ENCODE measurements at regions of chr3 and their contacts with region 1.

Region 1: GRCh38 chr3:98483130-98483482 is 14.4 kb upstream of the OR5K2 start:
- DNase-seq: no peak
- H3K4me3 ChIP-seq: no peak overlapping the region
- H3K4me3 Mint-ChIP-seq: no peak overlapping the region
- H3K27ac ChIP-seq: no peak overlapping the region
- H3K27ac Mint-ChIP-seq: peak overlapping the region in 1 of 7 donors; percentile 11
- H3K4me1 ChIP-seq: no peaks in the 10 kb centered on the region
- H3K4me1 Mint-ChIP-seq: no peaks in the 10 kb centered on the region
- H3K27me3 ChIP-seq: no peaks in the 10 kb centered on the region
- H3K27me3 Mint-ChIP-seq: peaks cover 4 to 7% of the 10 kb centered on the region in 2 donors

Region 2: GRCh38 chr3:98021830-98022590 is 461.1 kb before region 1 on chr3:
- CTCF ChIA-PET with region 1: no interaction called
- POLR2A ChIA-PET with region 1: no interaction called
- intact Hi-C with region 1: no loop called
- DNase-seq: no peak
- H3K4me3 ChIP-seq: no peak overlapping the region
- H3K4me3 Mint-ChIP-seq: no peak overlapping the region
- H3K27ac ChIP-seq: no peak overlapping the region
- H3K27ac Mint-ChIP-seq: peak overlapping the region in 1 of 7 donors; percentile 46
- H3K4me1 ChIP-seq: no peaks in the 10 kb centered on the region
- H3K4me1 Mint-ChIP-seq: peaks cover 0 to 5% (median 5%) of the 10 kb centered on the region in 4 donors
- H3K27me3 ChIP-seq: no peaks in the 10 kb centered on the region
- H3K27me3 Mint-ChIP-seq: no peaks in the 10 kb centered on the region

Region 3: GRCh38 chr3:99159220-99159762 is 676.2 kb after region 1 on chr3:
- CTCF ChIA-PET with region 1: no interaction called
- POLR2A ChIA-PET with region 1: no interaction called
- intact Hi-C with region 1: loop called (anchors 10 kb)
- DNase-seq: no peak
- H3K4me3 ChIP-seq: no peak overlapping the region
- H3K4me3 Mint-ChIP-seq: no peak overlapping the region
- H3K27ac ChIP-seq: no peak overlapping the region
- H3K27ac Mint-ChIP-seq: no peak overlapping the region
- H3K4me1 ChIP-seq: no peaks in the 10 kb centered on the region
- H3K4me1 Mint-ChIP-seq: no peaks in the 10 kb centered on the region
- H3K27me3 ChIP-seq: no peaks in the 10 kb centered on the region
- H3K27me3 Mint-ChIP-seq: no peaks in the 10 kb centered on the region

Measured in CD4-positive, alpha-beta memory T cell (primary cell).